ENCODE measurements at regions of chr7 and their contacts with region 1.

Region 1: DNA sequence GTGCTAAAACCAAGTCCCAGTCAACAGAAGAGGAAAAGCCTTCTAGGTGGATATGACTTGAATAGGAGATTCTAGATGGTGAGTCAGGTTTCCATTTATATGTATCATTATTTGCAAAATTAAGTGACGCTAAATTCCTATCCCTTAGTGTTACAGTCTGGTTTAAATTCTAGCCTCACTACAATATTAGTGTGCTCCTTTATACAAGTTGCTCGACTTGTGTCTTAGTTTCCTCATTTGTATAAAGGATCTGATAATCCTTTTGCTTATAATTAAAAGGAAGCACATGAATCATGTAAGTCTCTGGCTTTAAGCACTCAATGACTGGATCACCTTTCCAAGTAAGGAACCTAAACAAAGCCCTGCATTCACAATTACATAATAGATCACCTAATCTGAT is 105.7 kb downstream of the SVOPL start:
- DNase-seq: no peak
- H3K4me3 ChIP-seq: no peak overlapping the region
- H3K27ac ChIP-seq: no peak overlapping the region
- H3K4me1 ChIP-seq: no peaks in the 10 kb centered on the region
- H3K27me3 ChIP-seq: no peaks in the 10 kb centered on the region
- CTCF ChIP-seq: no peak
- POLR2A ChIP-seq: no peak

Region 2: GRCh38 chr7:138584696-138585095 is 10.8 kb before region 1 on chr7:
- CTCF ChIA-PET with region 1: no interaction called
- POLR2A ChIA-PET with region 1: no interaction called
- dilution Hi-C with region 1: no loop called
- intact Hi-C with region 1: loop called (anchors 1 kb)
- DNase-seq: no peak
- H3K4me3 ChIP-seq: no peak overlapping the region
- H3K27ac ChIP-seq: no peak overlapping the region
- H3K4me1 ChIP-seq: no peaks in the 10 kb centered on the region
- H3K27me3 ChIP-seq: no peaks in the 10 kb centered on the region
- CTCF ChIP-seq: no peak
- POLR2A ChIP-seq: no peak